Activated CD4-positive, alpha-beta T cell treated with anti-CD3 and anti-CD28 coated beads, Interleukin-2, amount 10 ng/mL, durations not matched to agents 7 days and 5 days (primary cell): ENCODE measurements at regions of chr6 and their contacts with region 1.

Region 1: GRCh38 chr6:139764498-139764986 is 390.1 kb upstream of the CITED2 start:
- DNase-seq: no peak
- H3K4me3 Mint-ChIP-seq: no peak overlapping the region
- H3K27ac Mint-ChIP-seq: no peak overlapping the region
- H3K4me1 Mint-ChIP-seq: peaks cover 4% of the 10 kb centered on the region
- H3K27me3 Mint-ChIP-seq: peaks cover 6% of the 10 kb centered on the region

Region 2: GRCh38 chr6:139256087-139256486 is 508.5 kb before region 1 on chr6:
- CTCF ChIA-PET with region 1: interaction called, 10 read pairs
- POLR2A ChIA-PET with region 1: no interaction called
- DNase-seq: no peak
- H3K4me3 Mint-ChIP-seq: no peak overlapping the region
- H3K27ac Mint-ChIP-seq: no peak overlapping the region
- H3K4me1 Mint-ChIP-seq: peaks cover 30% of the 10 kb centered on the region
- H3K27me3 Mint-ChIP-seq: no peaks in the 10 kb centered on the region

Region 3: GRCh38 chr6:139597771-139598755 is 166.5 kb before region 1 on chr6:
- CTCF ChIA-PET with region 1: no interaction called
- POLR2A ChIA-PET with region 1: interaction called, 13 read pairs
- DNase-seq: no peak
- H3K4me3 Mint-ChIP-seq: no peak overlapping the region
- H3K27ac Mint-ChIP-seq: no peak overlapping the region
- H3K4me1 Mint-ChIP-seq: peaks cover 2% of the 10 kb centered on the region
- H3K27me3 Mint-ChIP-seq: no peaks in the 10 kb centered on the region

Region 4: GRCh38 chr6:139753198-139753861 is 11.2 kb before region 1 on chr6:
- CTCF ChIA-PET with region 1: no interaction called
- POLR2A ChIA-PET with region 1: no interaction called
- DNase-seq: no peak
- H3K4me3 Mint-ChIP-seq: no peak overlapping the region
- H3K27ac Mint-ChIP-seq: no peak overlapping the region
- H3K4me1 Mint-ChIP-seq: no peaks in the 10 kb centered on the region
- H3K27me3 Mint-ChIP-seq: peaks cover 3% of the 10 kb centered on the region